ENCODE measurements at regions of chr17 and their contacts with region 1.

Region 1: DNA sequence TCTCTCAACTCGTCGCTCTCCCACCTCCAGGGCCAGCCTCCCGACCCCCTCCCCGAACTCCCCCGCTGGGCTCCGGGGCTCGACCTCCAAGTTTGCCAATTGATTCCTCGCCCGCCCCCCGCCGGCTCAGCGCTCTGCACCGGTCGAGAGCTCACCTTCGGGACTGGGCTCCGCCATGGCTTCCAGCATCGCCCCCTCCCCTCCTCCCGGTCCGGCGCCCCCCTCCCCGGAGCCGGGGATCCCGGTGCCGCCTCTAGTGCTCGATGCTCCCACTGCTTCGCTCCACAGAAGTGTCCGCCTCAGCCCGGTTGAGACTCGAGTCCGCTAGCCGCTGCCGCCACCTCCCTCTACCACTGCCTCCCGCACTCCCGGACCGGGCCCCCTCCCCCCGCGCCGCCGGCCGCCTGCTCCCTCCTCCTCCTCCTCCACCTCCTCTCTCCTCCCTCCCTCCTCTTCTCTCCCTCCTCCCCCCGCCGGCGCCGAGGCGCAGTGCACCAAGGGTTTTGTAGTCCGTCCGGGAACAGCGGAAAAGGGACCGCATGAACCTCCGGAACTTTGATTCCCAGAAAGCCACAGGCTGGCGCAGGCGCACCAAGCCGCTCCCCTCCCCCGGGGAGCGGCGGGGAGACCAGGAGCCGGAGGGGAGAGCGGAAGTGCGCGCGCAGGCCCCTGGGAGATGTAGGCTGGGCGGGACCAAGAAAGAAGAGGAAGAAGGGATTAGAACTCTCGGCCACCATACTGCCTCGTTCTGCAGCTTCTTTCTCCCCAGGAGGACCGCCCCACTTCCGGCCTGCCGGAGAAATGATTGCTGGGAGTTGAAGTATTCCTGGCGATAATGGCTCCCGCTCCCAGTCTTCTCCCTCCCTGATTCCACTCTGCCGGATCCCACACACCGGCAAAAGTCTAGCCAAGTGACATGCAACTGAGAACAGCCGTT is at the start of gene PHF23:
- DNase-seq: peak; percentile 98
- ATAC-seq: peak; percentile 76
- H3K4me3 Mint-ChIP-seq: peak within 1 kb of the TSS; percentile 96
- H3K27ac Mint-ChIP-seq: peak within 1 kb of the TSS; percentile 97
- H3K4me1 Mint-ChIP-seq: peaks cover 53% of the 10 kb centered on the region
- H3K27me3 Mint-ChIP-seq: peaks cover 2% of the 10 kb centered on the region
- CTCF ChIP-seq: no peak
- total RNA-seq, gene PHF23: 17.8 to 24.4 TPM

Region 2: DNA sequence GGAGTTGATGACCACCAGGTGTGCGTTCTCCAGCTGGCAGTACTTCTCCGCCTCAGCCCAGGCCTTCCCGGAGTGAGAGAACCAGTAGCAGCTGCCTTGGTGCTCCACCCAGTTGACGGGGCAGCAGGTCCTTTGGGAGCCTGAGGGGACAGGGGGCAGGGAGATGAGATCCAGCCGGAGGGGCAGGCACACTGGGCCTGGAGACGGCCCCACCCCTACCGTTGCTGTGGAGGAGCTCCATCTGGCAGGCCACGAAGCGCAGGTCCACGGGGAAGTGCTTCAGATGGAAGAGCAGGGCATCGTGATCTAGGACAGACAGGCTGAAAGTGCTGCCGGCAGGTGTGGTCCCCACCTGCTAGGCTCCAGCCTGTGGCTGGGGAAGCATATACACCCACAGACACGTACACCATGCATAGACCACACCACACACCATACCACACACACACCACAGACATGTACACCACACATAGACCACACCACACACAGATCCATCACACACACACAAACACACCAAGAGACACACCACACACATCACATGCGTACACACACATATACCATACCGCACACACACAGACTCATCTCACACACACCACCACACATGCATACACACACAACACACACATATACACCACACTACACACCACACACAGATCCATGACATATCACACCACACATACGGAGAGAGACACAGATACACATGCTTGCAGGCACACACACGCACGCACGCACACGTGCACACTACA is 132.2 kb before region 1 on chr17:
- CTCF ChIA-PET with region 1: no interaction called
- POLR2A ChIA-PET with region 1: no interaction called
- intact Hi-C with region 1: no loop called
- DNase-seq: no peak
- ATAC-seq: no peak
- H3K4me3 Mint-ChIP-seq: no peak overlapping the region
- H3K27ac Mint-ChIP-seq: no peak overlapping the region
- H3K4me1 Mint-ChIP-seq: peaks cover 6% of the 10 kb centered on the region
- H3K27me3 Mint-ChIP-seq: peaks cover 2% of the 10 kb centered on the region
- CTCF ChIP-seq: no peak

Region 3: DNA sequence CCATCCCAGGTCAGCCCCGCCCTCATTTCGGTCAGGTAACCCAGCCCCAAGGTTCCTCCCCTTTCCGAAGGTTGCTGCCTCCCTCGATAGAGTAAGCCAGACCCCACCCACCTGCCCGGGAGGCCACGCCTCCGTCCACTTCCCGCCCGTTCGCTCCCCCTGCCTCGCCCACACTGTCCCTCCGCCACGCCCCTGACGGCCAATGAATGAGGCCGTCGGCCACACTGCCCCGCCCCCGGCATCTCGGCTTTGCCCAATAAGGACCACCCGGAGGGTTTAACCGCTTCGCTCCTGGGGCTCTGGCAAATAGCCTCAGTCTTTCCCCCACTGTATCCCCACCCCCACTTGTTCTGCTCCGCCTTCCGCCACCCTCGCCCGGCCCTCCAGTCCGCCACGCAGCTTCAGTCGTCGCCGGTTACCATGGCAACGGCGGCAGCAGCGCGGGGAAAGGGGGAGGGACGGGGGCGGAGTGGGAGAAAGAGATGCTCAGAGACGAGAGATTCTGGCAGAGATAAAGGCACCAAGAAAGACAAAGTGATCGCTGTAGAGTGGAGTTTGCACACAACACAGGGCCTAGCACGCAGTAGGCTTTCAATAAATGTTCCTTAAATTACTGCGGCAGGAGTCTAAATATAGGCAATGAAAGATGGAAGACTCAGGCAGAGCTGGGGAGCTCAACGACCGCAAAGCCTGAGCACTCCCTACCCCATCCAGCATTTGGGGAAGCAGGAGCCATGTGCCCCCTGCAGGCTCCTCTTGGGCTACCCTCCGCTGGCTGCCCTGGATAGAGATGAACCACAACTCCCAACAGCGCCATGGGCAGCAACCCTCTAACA is 24.8 kb before region 1 on chr17:
- CTCF ChIA-PET with region 1: interaction called, 41 read pairs
- POLR2A ChIA-PET with region 1: interaction called, 261 read pairs
- intact Hi-C with region 1: no loop called
- DNase-seq: peak; percentile 100
- ATAC-seq: peak; percentile 85
- H3K4me3 Mint-ChIP-seq: peak overlapping the region; percentile 82
- H3K27ac Mint-ChIP-seq: peak overlapping the region; percentile 91
- H3K4me1 Mint-ChIP-seq: peaks cover 62% of the 10 kb centered on the region
- H3K27me3 Mint-ChIP-seq: peaks cover 8% of the 10 kb centered on the region
- CTCF ChIP-seq: peak; percentile 67

Region 4: DNA sequence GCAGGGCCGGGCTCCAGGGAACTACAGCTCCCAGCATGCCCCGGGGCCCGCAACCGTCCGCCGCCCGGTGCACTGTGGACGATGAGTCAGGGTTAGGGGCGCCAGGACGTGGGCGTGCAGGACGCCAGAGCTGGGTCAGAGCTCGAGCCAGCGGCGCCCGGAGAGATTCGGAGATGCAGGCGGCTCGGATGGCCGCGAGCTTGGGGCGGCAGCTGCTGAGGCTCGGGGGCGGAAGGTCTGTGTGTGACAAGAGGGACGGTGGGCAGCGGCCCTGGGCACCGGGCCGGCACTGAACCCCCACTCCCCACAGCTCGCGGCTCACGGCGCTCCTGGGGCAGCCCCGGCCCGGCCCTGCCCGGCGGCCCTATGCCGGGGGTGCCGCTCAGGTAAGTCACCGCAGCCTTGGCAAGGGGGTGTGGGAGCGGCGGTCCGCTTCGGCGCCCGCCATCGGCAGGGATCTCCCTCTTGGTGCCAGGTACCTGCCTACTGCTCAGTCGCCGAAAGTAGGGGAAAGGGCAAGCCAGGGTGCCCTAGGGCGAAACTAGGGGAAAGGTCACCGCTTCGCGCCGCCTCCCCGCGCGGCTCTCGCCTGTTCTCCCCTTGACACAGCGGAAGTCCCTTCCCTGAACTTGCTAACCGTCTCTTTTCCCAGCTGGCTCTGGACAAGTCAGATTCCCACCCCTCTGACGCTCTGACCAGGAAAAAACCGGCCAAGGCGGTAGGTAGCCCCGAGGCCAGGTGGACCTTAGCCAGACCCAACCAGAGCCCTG is 19.4 kb before region 1 on chr17 and contains the starts of genes ACADVL and DLG4:
- CTCF ChIA-PET with region 1: interaction called, 41 read pairs
- POLR2A ChIA-PET with region 1: interaction called, 261 read pairs
- intact Hi-C with region 1: no loop called
- DNase-seq: peak; percentile 96
- ATAC-seq: peak; percentile 74
- H3K4me3 Mint-ChIP-seq: peak within 1 kb of the TSS; percentile 94
- H3K27ac Mint-ChIP-seq: peak within 1 kb of the TSS; percentile 94
- H3K4me1 Mint-ChIP-seq: peaks cover 55% of the 10 kb centered on the region
- H3K27me3 Mint-ChIP-seq: no peaks in the 10 kb centered on the region
- CTCF ChIP-seq: no peak
- total RNA-seq, gene ACADVL: 288 to 291 TPM
- total RNA-seq, gene DLG4: 9.5 to 9.7 TPM

Region 5: GRCh38 chr17:7252176-7253043 is 13.1 kb after region 1 on chr17 and contains the start of gene ELP5:
- CTCF ChIA-PET with region 1: interaction called, 7 read pairs
- POLR2A ChIA-PET with region 1: interaction called, 67 read pairs
- intact Hi-C with region 1: no loop called
- DNase-seq: peak; percentile 96
- ATAC-seq: peak; percentile 69
- H3K4me3 Mint-ChIP-seq: peak within 1 kb of the TSS; percentile 91
- H3K27ac Mint-ChIP-seq: peak within 1 kb of the TSS; percentile 100
- H3K4me1 Mint-ChIP-seq: peaks cover 35% of the 10 kb centered on the region
- H3K27me3 Mint-ChIP-seq: no peaks in the 10 kb centered on the region
- CTCF ChIP-seq: no peak
- total RNA-seq, gene ELP5: 80.2 to 85.4 TPM